MCF 10A (cell line): ENCODE measurements at regions of chr19 and their contacts with region 1.

Region 1: DNA sequence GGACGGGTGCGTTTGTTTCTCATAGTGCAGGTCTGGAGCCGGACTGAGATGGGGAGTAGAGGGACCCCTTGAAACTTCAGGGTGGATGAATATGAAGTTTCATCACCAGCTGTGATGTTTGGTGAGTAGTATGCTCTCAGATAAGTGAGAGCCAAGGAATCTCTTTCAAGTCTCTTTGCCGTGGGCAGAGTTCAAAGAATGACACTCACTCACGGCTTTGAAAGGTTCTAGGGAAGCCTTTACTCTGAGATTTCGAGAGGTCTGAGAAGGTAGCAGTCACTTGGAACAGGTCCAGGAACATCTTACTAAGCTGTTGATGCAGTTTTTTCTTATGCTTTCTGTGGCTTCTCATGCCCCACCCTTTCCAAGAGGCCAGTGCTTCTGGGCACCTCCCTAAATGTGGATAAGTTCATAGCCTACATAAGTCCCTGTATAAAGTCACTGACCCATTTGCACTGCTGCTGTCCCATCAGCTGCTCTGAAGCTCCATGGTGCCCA is at the start of gene IGFL2:
- DNase-seq: peak; percentile 58
- H3K4me3 Mint-ChIP-seq: no peak within 1 kb of the TSS
- H3K27ac Mint-ChIP-seq: peak within 1 kb of the TSS; percentile 90
- H3K4me1 Mint-ChIP-seq: peaks cover 32% of the 10 kb centered on the region
- H3K27me3 Mint-ChIP-seq: no peaks in the 10 kb centered on the region
- CTCF ChIP-seq: no peak
- total RNA-seq, gene IGFL2: 1.3 TPM in 1 of 2 replicates, not detected in the other

Region 2: DNA sequence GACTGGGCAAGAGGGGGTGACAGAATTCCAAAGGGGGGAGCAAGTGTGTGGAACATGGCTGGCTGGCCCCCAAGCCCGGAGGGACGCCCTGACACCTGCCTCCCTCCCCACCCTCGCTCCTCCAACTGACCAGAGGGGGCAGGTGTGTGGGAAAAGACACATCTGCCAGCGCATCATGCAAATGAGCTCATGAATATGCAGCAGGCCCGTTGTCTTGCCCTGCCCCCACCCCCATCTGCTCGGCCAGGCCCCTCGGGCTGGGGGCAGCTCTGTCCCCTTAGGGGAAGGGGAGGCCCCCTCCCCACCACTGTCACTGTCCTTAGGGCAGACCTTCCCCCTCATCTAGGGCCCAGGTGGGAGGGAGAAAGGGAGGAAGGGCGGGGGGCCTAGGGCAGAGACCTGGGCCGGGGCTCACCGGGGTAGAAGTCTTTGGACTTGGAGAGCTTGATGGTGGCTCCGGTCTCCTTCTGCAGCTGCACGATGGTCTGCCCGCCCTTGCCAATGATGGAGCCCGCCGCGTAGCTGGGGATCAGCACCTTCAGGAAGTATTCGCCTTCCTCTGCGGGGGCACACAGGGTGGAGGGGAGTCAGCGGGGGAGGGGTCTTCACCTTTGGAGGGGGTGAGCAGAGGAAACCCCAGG is 187.1 kb before region 1 on chr19:
- CTCF ChIA-PET with region 1: no interaction called
- POLR2A ChIA-PET with region 1: no interaction called
- intact Hi-C with region 1: no loop called
- DNase-seq: peak; percentile 23
- H3K4me3 Mint-ChIP-seq: no peak overlapping the region
- H3K27ac Mint-ChIP-seq: peak overlapping the region; percentile 1
- H3K4me1 Mint-ChIP-seq: peaks cover 21% of the 10 kb centered on the region
- H3K27me3 Mint-ChIP-seq: peaks cover 30% of the 10 kb centered on the region
- CTCF ChIP-seq: no peak

Region 3: GRCh38 chr19:46133101-46133682 is 14.6 kb before region 1 on chr19:
- CTCF ChIA-PET with region 1: no interaction called
- POLR2A ChIA-PET with region 1: interaction called, 14 read pairs
- intact Hi-C with region 1: no loop called
- DNase-seq: peak; percentile 95
- H3K4me3 Mint-ChIP-seq: peak overlapping the region; percentile 62
- H3K27ac Mint-ChIP-seq: peak overlapping the region; percentile 99
- H3K4me1 Mint-ChIP-seq: peaks cover 27% of the 10 kb centered on the region
- H3K27me3 Mint-ChIP-seq: no peaks in the 10 kb centered on the region
- CTCF ChIP-seq: no peak